ENCODE measurements at regions of chr6 and their contacts with region 1.

Region 1: DNA sequence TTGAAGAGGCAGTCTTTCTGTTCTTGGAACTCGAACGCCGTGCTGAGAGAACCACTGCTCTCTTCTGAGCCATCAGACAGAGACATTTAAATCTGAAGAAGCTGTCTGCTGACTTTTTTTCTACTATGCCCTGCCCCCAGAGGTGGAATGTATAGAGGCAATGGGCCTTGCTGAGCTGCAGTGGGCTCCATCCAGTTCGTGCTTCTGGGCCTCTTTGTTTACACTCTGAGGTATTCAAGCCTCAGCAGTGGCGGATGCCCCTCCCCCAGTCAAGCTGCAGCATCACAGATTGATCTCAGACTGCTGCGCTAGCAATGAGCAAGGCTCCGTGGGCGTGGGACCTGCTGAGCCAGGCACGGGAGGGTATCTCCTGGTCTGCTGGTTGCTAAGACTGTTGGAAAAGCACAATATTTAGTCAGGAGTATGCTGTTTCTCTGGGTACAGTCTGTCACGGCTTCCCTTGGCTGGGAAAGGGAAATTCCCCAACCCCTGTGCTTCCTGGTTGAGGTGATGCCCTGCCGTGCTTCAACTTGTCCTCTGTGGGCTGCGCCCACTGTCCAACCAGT is 526.8 kb downstream of the CD109 start:
- DNase-seq: no peak
- ATAC-seq: no peak
- H3K4me3 ChIP-seq: no peak overlapping the region
- H3K27ac ChIP-seq: no peak overlapping the region
- H3K4me1 ChIP-seq: no peaks in the 10 kb centered on the region
- H3K27me3 ChIP-seq: no peaks in the 10 kb centered on the region
- CTCF ChIP-seq: no peak
- POLR2A ChIP-seq: no peak

Region 2: GRCh38 chr6:74603322-74604076 is 380.6 kb after region 1 on chr6:
- in situ Hi-C with region 1: no loop called
- intact Hi-C with region 1: loop called (anchors 5 kb)
- DNase-seq: no peak
- ATAC-seq: no peak
- H3K4me3 ChIP-seq: no peak overlapping the region
- H3K27ac ChIP-seq: no peak overlapping the region
- H3K4me1 ChIP-seq: no peaks in the 10 kb centered on the region
- H3K27me3 ChIP-seq: no peaks in the 10 kb centered on the region
- CTCF ChIP-seq: no peak
- POLR2A ChIP-seq: no peak